Naive thymus-derived CD4-positive, alpha-beta T cell (primary cell): ENCODE measurements at regions of chr20 and their contacts with region 1.

Region 1: GRCh38 chr20:53915446-53916172 is 154.8 kb downstream of the BCAS1 start:
- DNase-seq: peak; percentile 70 to 90 (median 88)
- ATAC-seq: peak; percentile 99
- H3K4me3 ChIP-seq: peak overlapping the region; percentile 79
- H3K4me3 Mint-ChIP-seq: peak overlapping the region; percentile 88 to 97 (median 94)
- H3K27ac ChIP-seq: peak overlapping the region; percentile 70
- H3K27ac Mint-ChIP-seq: peak overlapping the region; percentile 82 to 95 (median 90)
- H3K4me1 ChIP-seq: peaks cover 5 to 7% of the 10 kb centered on the region in 2 donors
- H3K4me1 Mint-ChIP-seq: peaks cover 15 to 37% (median 23%) of the 10 kb centered on the region in 7 donors
- H3K27me3 ChIP-seq: no peaks in the 10 kb centered on the region
- H3K27me3 Mint-ChIP-seq: no peaks in the 10 kb centered on the region

Region 2: DNA sequence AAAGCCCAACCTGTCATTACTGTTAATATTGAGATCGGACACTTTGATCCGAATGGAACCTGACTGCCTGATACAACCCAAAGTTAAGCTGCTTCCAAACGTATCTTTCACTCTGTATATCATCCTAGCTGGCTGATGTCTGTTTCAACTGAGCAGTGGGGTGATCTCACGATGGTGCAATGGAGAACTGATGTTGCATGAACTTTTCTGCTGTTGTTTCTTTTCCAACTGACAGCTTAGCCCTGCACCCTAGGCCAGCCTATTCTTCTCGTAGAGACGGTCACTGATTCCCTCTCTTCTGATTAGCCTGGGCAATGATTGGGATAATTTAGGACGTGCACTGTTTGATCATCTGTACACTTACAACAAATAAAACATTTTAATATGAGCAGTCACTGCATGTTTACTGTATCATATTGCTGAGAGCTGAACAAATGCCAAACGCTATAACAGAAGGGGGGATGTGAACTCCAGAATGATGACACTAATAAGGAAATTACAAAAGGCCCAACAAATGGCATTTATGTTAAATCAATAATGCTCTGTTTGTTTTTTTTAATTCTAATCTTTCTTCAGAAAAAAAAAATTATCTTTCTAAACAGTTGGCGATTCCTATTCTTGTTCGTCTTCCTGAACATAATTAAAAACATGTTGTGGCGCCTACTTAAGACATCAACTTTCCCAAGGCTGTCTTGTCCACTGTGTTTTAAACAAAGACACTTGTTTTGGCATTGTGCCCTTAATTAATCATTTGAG is 506.7 kb before region 1 on chr20:
- CTCF ChIA-PET with region 1: no interaction called
- POLR2A ChIA-PET with region 1: no interaction called
- intact Hi-C with region 1: no loop called
- DNase-seq: no peak
- ATAC-seq: no peak
- H3K4me3 ChIP-seq: no peak overlapping the region
- H3K4me3 Mint-ChIP-seq: no peak overlapping the region
- H3K27ac ChIP-seq: no peak overlapping the region
- H3K27ac Mint-ChIP-seq: no peak overlapping the region
- H3K4me1 ChIP-seq: peaks cover 0 to 3% of the 10 kb centered on the region in 2 donors
- H3K4me1 Mint-ChIP-seq: peaks cover 7 to 40% (median 28%) of the 10 kb centered on the region in 7 donors
- H3K27me3 ChIP-seq: no peaks in the 10 kb centered on the region
- H3K27me3 Mint-ChIP-seq: peaks cover 0 to 4% (median 0%) of the 10 kb centered on the region in 5 donors

Region 3: GRCh38 chr20:53623454-53624211 is 292.0 kb before region 1 on chr20:
- CTCF ChIA-PET with region 1: interaction called, 10 read pairs
- POLR2A ChIA-PET with region 1: interaction called, 3 read pairs
- intact Hi-C with region 1: no loop called
- DNase-seq: peak in 4 of 9 donors; percentile 28 to 44 (median 31)
- ATAC-seq: peak; percentile 83
- H3K4me3 ChIP-seq: peak overlapping the region; percentile 56
- H3K4me3 Mint-ChIP-seq: peak overlapping the region; percentile 78 to 92 (median 87)
- H3K27ac ChIP-seq: peak overlapping the region; percentile 74
- H3K27ac Mint-ChIP-seq: peak overlapping the region; percentile 91 to 98 (median 97)
- H3K4me1 ChIP-seq: peaks cover 31 to 32% of the 10 kb centered on the region in 2 donors
- H3K4me1 Mint-ChIP-seq: peaks cover 17 to 53% (median 44%) of the 10 kb centered on the region in 7 donors
- H3K27me3 ChIP-seq: no peaks in the 10 kb centered on the region
- H3K27me3 Mint-ChIP-seq: no peaks in the 10 kb centered on the region

Region 4: DNA sequence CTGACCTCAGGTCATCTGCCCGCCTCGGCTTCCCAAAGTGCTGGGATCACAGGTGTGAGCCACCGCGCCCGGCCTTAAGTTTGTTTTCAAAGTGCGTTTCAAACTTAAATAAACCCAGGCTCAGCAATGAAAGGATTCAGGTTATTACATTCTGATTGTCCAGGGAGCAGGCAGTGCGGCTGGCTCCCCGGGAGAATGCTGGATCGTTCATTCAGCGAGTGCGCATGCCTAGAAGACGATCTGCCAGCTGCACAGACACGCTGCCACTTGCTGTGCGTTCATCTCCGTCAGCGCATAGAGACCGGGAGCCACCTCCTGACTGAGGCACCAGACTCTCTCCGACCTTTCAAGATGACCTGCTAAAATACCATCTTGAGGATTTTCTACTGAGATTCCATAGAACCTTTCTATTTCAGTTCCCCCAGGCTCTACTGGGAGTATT is 158.1 kb before region 1 on chr20:
- CTCF ChIA-PET with region 1: interaction called, 10 read pairs
- POLR2A ChIA-PET with region 1: interaction called, 3 read pairs
- intact Hi-C with region 1: loop called in 1 of 2 experiments (anchors 5 kb)
- DNase-seq: no peak
- ATAC-seq: no peak
- H3K4me3 ChIP-seq: no peak overlapping the region
- H3K4me3 Mint-ChIP-seq: no peak overlapping the region
- H3K27ac ChIP-seq: no peak overlapping the region
- H3K27ac Mint-ChIP-seq: peak overlapping the region in 6 of 9 donors; percentile 39 to 72 (median 58)
- H3K4me1 ChIP-seq: peaks cover 39 to 41% of the 10 kb centered on the region in 2 donors
- H3K4me1 Mint-ChIP-seq: peaks cover 25 to 52% (median 40%) of the 10 kb centered on the region in 7 donors
- H3K27me3 ChIP-seq: no peaks in the 10 kb centered on the region
- H3K27me3 Mint-ChIP-seq: no peaks in the 10 kb centered on the region

Region 5: DNA sequence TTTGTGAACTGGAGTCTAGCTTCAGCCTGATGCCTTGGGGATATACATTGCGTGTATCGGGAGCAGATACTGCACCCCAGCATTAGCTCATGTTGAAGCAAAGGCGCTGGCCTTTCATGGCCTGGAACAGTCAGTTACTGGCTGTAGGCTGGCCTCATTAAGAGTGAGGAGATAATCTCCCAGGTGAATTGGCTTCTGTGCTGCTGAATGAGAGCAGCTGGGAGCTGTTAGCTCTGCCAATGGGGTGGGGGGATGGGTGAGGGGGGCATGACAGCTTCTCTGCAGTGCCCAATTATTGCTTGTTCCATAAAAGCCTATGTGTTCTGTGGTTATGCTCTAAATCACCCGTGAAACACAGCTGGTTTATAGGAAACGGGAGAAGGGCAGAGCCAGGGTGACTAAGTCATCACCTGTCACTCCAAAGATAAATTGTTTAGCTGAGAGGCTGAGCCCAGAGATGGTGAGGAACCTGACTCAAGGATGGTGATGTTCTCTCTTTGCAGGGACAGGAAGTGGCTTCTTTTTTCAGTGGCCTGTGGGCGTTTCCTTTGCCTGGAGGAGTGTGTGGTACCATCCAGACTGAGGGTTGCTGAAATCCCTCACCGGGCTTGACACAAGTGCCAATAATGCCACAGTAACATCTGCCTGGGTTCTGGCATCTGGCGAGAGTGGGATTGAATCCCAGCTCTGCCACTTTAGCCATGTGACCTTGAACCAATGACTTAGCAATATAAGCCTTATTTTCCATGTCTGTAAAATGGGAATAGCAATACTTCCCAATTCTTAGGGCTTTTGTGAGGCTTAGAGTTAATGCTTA is 16.1 kb before region 1 on chr20:
- CTCF ChIA-PET with region 1: interaction called, 11 read pairs
- POLR2A ChIA-PET with region 1: interaction called, 7 read pairs
- intact Hi-C with region 1: loop called in 1 of 2 experiments (anchors 1 kb)
- DNase-seq: peak in 8 of 9 donors; percentile 66 to 78 (median 74)
- ATAC-seq: peak; percentile 91
- H3K4me3 ChIP-seq: no peak overlapping the region
- H3K4me3 Mint-ChIP-seq: peak overlapping the region in 7 of 10 donors; percentile 28 to 72 (median 44)
- H3K27ac ChIP-seq: peak overlapping the region; percentile 2
- H3K27ac Mint-ChIP-seq: peak overlapping the region; percentile 61 to 92 (median 81)
- H3K4me1 ChIP-seq: peaks cover 13 to 18% of the 10 kb centered on the region in 2 donors
- H3K4me1 Mint-ChIP-seq: peaks cover 0 to 51% (median 40%) of the 10 kb centered on the region in 7 donors
- H3K27me3 ChIP-seq: no peaks in the 10 kb centered on the region
- H3K27me3 Mint-ChIP-seq: no peaks in the 10 kb centered on the region

Region 6: GRCh38 chr20:54062812-54063280 is 147.2 kb after region 1 on chr20:
- CTCF ChIA-PET with region 1: interaction called, 12 read pairs
- POLR2A ChIA-PET with region 1: interaction called, 3 read pairs
- intact Hi-C with region 1: loop called in 1 of 2 experiments (anchors 2 kb)
- DNase-seq: peak in 6 of 9 donors; percentile 8 to 40 (median 26)
- ATAC-seq: peak; percentile 61
- H3K4me3 ChIP-seq: no peak overlapping the region
- H3K4me3 Mint-ChIP-seq: no peak overlapping the region
- H3K27ac ChIP-seq: no peak overlapping the region
- H3K27ac Mint-ChIP-seq: no peak overlapping the region
- H3K4me1 ChIP-seq: peaks cover 0 to 9% of the 10 kb centered on the region in 2 donors
- H3K4me1 Mint-ChIP-seq: peaks cover 0 to 11% (median 7%) of the 10 kb centered on the region in 7 donors
- H3K27me3 ChIP-seq: no peaks in the 10 kb centered on the region
- H3K27me3 Mint-ChIP-seq: no peaks in the 10 kb centered on the region